ENCODE measurements at regions of chr7 and their contacts with region 1.

Region 1: GRCh38 chr7:147982307-147982706 is 608.3 kb upstream of the C7orf33 start:
- DNase-seq: no peak
- ATAC-seq: no peak
- H3K4me3 ChIP-seq: no peak overlapping the region
- H3K27ac ChIP-seq: no peak overlapping the region
- H3K4me1 ChIP-seq: no peaks in the 10 kb centered on the region
- H3K27me3 ChIP-seq: no peaks in the 10 kb centered on the region
- CTCF ChIP-seq: no peak

Region 2: GRCh38 chr7:147941381-147941780 is 40.9 kb before region 1 on chr7:
- intact Hi-C with region 1: loop called in 1 of 10 experiments (anchors 2 kb)
- DNase-seq: no peak
- ATAC-seq: no peak
- H3K4me3 ChIP-seq: no peak overlapping the region
- H3K27ac ChIP-seq: no peak overlapping the region
- H3K4me1 ChIP-seq: no peaks in the 10 kb centered on the region
- H3K27me3 ChIP-seq: no peaks in the 10 kb centered on the region
- CTCF ChIP-seq: no peak